ENCODE measurements at regions of chr2 and their contacts with region 1.

Region 1: GRCh38 chr2:216023055-216023648 is 9.8 kb upstream of the MREG start:
- DNase-seq: no peak
- H3K4me3 ChIP-seq: no peak overlapping the region
- H3K27ac ChIP-seq: no peak overlapping the region
- H3K4me1 ChIP-seq: no peaks in the 10 kb centered on the region
- H3K27me3 ChIP-seq: no peaks in the 10 kb centered on the region
- CTCF ChIP-seq: peak in 2 of 3 experiments; percentile 26 to 54

Region 2: GRCh38 chr2:215949991-215950404 is 73.2 kb before region 1 on chr2:
- intact Hi-C with region 1: loop called (anchors 5 kb)
- DNase-seq: no peak
- H3K4me3 ChIP-seq: no peak overlapping the region
- H3K27ac ChIP-seq: no peak overlapping the region
- H3K4me1 ChIP-seq: no peaks in the 10 kb centered on the region
- H3K27me3 ChIP-seq: no peaks in the 10 kb centered on the region
- CTCF ChIP-seq: peak in 1 of 3 experiments; percentile 37